ENCODE measurements at regions of chr19 and their contacts with region 1.

Region 1: DNA sequence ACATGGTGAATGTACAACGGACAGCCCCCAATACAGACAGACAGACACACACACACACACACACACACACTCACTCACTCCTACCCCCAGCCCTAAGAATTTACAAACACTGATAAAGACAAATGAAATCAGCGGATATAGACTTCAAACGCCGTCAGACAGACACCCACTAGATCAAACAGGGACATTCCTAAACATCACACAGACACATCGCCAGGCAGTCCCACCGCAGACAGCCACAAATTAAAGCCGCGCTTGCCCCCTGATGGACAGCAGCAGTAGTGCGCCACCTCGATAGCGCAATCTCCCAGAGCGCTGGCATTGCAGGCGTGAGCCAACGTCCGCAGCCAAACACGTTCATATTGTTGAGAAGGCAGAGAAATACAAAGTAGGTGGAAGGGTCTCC is 24.7 kb upstream of the ADGRE1 start:
- DNase-seq: peak; percentile 93
- H3K4me3 Mint-ChIP-seq: peak overlapping the region; percentile 79
- H3K27ac Mint-ChIP-seq: peak overlapping the region; percentile 79
- H3K4me1 Mint-ChIP-seq: peaks cover 22% of the 10 kb centered on the region
- H3K27me3 Mint-ChIP-seq: no peaks in the 10 kb centered on the region

Region 2: GRCh38 chr19:6516659-6517291 is 345.9 kb before region 1 on chr19:
- CTCF ChIA-PET with region 1: interaction called, 21 read pairs
- POLR2A ChIA-PET with region 1: no interaction called
- DNase-seq: peak; percentile 92
- H3K4me3 Mint-ChIP-seq: peak overlapping the region; percentile 89
- H3K27ac Mint-ChIP-seq: peak overlapping the region; percentile 89
- H3K4me1 Mint-ChIP-seq: peaks cover 32% of the 10 kb centered on the region
- H3K27me3 Mint-ChIP-seq: no peaks in the 10 kb centered on the region

Region 3: GRCh38 chr19:6779206-6779605 is 83.5 kb before region 1 on chr19:
- CTCF ChIA-PET with region 1: no interaction called
- POLR2A ChIA-PET with region 1: no interaction called
- DNase-seq: no peak
- H3K4me3 Mint-ChIP-seq: no peak overlapping the region
- H3K27ac Mint-ChIP-seq: peak overlapping the region; percentile 11
- H3K4me1 Mint-ChIP-seq: peaks cover 60% of the 10 kb centered on the region
- H3K27me3 Mint-ChIP-seq: no peaks in the 10 kb centered on the region

Region 4: DNA sequence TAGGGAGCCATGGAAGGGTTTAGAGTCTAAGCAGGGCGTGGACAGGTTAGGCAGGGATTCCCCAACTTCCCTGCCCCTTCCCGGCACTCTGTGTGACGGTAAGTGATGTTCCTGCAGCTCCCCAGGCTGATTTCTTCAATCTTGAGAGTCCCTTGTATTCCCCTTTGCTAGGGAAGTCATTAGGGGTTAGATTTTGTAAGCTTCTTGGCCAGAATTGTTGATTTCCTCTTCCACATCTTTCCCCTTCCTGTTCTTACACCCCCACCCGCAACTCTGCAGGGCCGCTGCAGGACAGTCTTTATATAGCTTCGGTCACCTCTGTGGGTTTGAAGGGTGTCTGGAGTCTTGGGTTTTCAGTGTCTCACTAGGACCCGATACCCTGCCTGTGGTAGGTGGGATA is 14.1 kb after region 1 on chr19:
- CTCF ChIA-PET with region 1: interaction called, 11 read pairs
- POLR2A ChIA-PET with region 1: no interaction called
- DNase-seq: no peak
- H3K4me3 Mint-ChIP-seq: no peak overlapping the region
- H3K27ac Mint-ChIP-seq: no peak overlapping the region
- H3K4me1 Mint-ChIP-seq: peaks cover 6% of the 10 kb centered on the region
- H3K27me3 Mint-ChIP-seq: no peaks in the 10 kb centered on the region

Region 5: GRCh38 chr19:6947745-6948144 is 85.1 kb after region 1 on chr19:
- CTCF ChIA-PET with region 1: no interaction called
- POLR2A ChIA-PET with region 1: no interaction called
- DNase-seq: peak; percentile 41
- H3K4me3 Mint-ChIP-seq: peak overlapping the region; percentile 8
- H3K27ac Mint-ChIP-seq: peak overlapping the region; percentile 76
- H3K4me1 Mint-ChIP-seq: peaks cover 19% of the 10 kb centered on the region
- H3K27me3 Mint-ChIP-seq: no peaks in the 10 kb centered on the region

Measured in activated CD4-positive, alpha-beta T cell treated with anti-CD3 and anti-CD28 coated beads, Interleukin-2, amount 10 ng/mL, durations not matched to agents 7 days and 5 days (primary cell).